Tibial artery (tissue), 4 donors: ENCODE measurements at regions of chr4 and their contacts with region 1.

Region 1: DNA sequence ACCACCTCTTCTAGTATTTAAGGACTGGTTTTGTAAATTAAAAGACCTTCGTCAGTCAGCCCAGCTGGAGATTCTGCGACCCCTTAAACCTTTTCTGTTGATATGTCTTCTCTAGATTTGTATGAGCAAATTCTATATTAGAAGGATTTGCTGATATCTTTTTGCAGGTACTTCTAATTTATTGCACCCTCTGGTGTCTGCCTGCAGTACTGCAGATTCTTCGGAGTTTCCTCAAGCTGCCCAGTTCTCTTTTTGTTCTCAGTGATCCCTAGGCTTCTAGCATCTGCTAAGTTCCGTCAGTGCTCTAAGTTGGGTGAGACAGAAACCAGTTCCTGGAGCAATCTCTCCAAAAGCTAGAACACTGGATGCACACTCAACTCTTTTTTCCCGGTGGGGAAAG is 545.2 kb downstream of the C4orf33 start:
- DNase-seq: peak in 1 of 2 donors; percentile 63
- H3K4me3 ChIP-seq: no peak overlapping the region
- H3K27ac ChIP-seq: no peak overlapping the region
- H3K4me1 ChIP-seq: no peaks in the 10 kb centered on the region
- H3K27me3 ChIP-seq: no peaks in the 10 kb centered on the region
- CTCF ChIP-seq: peak; percentile 64 to 75

Region 2: DNA sequence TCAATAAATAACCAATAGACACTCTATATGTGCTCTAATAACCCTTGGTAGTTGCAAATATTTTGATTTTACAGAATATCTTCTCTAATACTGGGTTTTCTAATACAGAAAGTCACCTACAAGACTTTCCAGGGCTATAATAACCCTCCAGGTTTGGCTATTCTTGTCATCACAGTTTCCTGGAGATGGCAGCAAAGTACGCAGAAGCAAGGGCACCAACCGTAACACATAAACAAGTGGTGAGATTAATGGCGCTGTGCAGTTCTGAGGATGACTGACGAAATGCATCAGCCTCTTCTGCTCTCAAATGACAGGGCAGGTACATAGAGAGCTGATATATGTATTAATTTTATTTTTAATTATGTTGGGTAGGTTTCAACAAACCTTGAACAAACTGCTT is 422.8 kb before region 1 on chr4:
- intact Hi-C with region 1: loop called (anchors 5 kb)
- DNase-seq: no peak
- H3K4me3 ChIP-seq: peak overlapping the region in 1 of 2 donors; percentile 11
- H3K27ac ChIP-seq: peak overlapping the region in 1 of 2 donors; percentile 31
- H3K4me1 ChIP-seq: peaks cover 0 to 12% (median 0%) of the 10 kb centered on the region in 4 donors
- H3K27me3 ChIP-seq: no peaks in the 10 kb centered on the region
- CTCF ChIP-seq: peak; percentile 24 to 35

Region 3: DNA sequence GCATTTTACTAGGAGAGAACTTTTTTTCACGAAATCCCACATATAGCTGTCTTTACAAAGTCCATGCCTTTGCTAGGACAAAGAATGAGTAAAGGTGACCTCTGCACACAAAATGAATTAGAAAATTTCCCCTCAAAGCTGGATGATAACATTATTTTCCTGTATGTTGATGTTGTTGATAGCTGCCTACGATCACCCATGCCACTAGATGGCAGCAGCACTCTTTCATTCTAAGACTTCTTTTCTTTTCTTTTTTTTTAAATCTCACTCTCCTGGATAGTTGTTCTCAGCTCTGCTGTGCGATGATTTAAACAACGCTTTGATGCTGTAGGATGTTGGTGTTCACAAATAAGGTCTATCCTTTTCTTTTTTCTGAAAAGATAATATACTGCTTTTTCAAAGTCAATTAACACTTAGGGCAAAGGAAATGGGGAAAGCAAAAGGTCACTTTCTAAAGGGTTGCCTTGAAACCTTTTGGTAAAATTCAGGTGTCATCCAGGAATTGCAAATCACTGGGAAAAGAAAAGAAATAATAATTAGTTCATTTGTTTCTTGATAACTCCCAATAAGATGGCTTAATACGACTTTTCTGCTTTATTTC is 278.4 kb before region 1 on chr4:
- intact Hi-C with region 1: loop called (anchors 5 kb)
- DNase-seq: peak in 1 of 2 donors; percentile 46
- H3K4me3 ChIP-seq: no peak overlapping the region
- H3K27ac ChIP-seq: no peak overlapping the region
- H3K4me1 ChIP-seq: peaks cover 0 to 6% (median 1%) of the 10 kb centered on the region in 4 donors
- H3K27me3 ChIP-seq: no peaks in the 10 kb centered on the region
- CTCF ChIP-seq: peak; percentile 73 to 74

Region 4: GRCh38 chr4:129545599-129546278 is 95.4 kb before region 1 on chr4:
- intact Hi-C with region 1: no loop called
- DNase-seq: peak; percentile 29 to 67
- H3K4me3 ChIP-seq: no peak overlapping the region
- H3K27ac ChIP-seq: no peak overlapping the region
- H3K4me1 ChIP-seq: no peaks in the 10 kb centered on the region
- H3K27me3 ChIP-seq: no peaks in the 10 kb centered on the region
- CTCF ChIP-seq: no peak